B cell (primary cell): ENCODE measurements at regions of chr9 and their contacts with region 1.

Region 1: GRCh38 chr9:121074635-121075385 is at the start of gene CNTRL:
- DNase-seq: peak; percentile 85
- ATAC-seq: peak; percentile 72
- H3K4me3 ChIP-seq: peak within 1 kb of the TSS; percentile 80 to 99 (median 92)
- H3K4me3 Mint-ChIP-seq: peak within 1 kb of the TSS; percentile 100
- H3K27ac ChIP-seq: peak within 1 kb of the TSS; percentile 86 to 99
- H3K27ac Mint-ChIP-seq: peak within 1 kb of the TSS; percentile 94
- H3K4me1 ChIP-seq: peaks cover 42 to 49% of the 10 kb centered on the region in 2 donors
- H3K4me1 Mint-ChIP-seq: peaks cover 64% of the 10 kb centered on the region
- H3K27me3 ChIP-seq: no peaks in the 10 kb centered on the region
- H3K27me3 Mint-ChIP-seq: no peaks in the 10 kb centered on the region
- CTCF ChIP-seq: no peak
- total RNA-seq, gene CNTRL: 146 and 150 TPM in 2 replicates

Region 2: DNA sequence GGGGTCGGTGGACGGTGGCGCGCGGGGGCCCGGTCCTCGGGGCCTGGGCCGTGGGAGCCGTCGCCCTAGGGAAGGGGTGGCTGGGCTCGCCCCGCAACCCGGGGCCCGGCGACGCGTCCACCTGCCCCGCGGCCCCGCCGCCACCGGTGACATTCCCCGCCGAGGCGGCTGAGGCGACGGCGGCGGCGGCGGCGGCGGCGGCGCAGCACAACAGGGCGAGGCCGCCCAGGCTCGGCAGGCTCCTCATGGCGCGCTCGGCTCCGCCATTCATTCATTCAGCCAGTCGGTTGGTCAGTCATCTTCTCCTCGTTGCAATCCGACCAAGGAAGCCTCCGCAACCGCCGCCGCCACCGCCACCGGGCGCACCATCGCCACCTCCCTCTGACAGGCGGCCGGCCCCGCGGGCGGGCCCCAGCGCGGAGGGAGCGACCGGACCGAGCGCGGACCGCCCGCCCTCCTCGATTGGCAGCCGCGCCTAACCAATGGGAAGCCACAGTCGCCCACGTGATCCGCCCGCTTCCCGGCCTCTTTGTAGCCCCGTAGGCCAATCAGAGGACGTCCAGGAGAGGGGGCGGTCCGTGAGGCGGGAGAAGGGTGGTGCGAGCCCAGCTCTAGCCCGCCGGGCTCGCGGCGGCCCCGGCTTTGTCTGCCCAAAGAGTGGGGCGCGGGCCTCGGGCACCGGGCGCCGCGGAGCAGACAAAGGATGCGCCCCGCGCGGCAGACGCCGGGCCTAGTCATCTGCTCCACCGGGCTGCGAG is 360.5 kb before region 1 on chr9 and contains the start of gene MEGF9:
- CTCF ChIA-PET with region 1: no interaction called
- POLR2A ChIA-PET with region 1: interaction called, 5 read pairs
- intact Hi-C with region 1: loop called (anchors 1 kb)
- DNase-seq: peak; percentile 97
- ATAC-seq: peak; percentile 94
- H3K4me3 ChIP-seq: peak within 1 kb of the TSS; percentile 56 to 81 (median 68)
- H3K4me3 Mint-ChIP-seq: peak within 1 kb of the TSS; percentile 88
- H3K27ac ChIP-seq: peak within 1 kb of the TSS; percentile 43 to 72
- H3K27ac Mint-ChIP-seq: peak within 1 kb of the TSS; percentile 89
- H3K4me1 ChIP-seq: peaks cover 41 to 43% of the 10 kb centered on the region in 2 donors
- H3K4me1 Mint-ChIP-seq: peaks cover 38% of the 10 kb centered on the region
- H3K27me3 ChIP-seq: no peaks in the 10 kb centered on the region
- H3K27me3 Mint-ChIP-seq: no peaks in the 10 kb centered on the region
- CTCF ChIP-seq: no peak
- total RNA-seq, gene MEGF9: 11.3 and 11.6 TPM in 2 replicates

Region 3: DNA sequence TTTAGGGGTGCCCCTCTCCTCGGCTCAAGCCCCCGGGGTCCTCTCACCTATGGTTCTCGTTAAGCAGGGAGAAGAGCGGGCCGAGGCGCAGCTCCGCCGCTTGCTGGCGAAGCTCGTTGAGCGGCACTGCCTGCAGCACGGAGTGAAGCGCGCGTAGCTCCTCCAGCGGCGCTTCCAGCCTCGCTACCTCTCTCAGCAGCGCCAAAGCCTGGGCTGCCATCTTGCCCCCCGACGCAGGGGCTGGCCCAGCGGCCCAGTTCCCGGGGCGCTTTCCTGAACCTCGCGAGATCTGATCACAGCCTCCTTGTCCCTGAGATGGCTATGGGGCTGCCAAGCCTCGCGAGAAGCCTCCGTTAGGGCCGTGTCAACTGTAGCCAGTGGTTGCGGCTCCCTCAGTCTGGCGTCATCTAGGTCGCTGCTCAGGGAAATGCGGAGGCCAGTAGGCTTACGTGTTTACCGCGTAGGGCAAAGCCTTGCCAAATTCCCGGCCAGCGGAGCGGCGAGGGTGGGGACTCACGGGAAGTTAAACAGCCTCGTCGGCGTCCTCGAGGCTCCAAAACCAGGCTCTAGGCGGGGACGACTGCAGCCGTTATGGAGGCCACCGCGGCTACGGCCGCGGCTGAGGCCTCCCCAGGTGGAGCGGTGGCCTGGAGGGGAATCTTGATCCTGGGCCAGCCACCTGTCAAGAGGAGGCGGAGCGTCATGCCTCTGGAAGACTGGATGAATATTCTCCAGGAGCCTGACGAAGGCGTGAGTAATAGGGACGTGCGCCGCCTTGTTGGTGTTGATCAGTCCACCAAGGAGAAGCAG is 231.9 kb before region 1 on chr9 and contains the start of gene PSMD5:
- CTCF ChIA-PET with region 1: no interaction called
- POLR2A ChIA-PET with region 1: no interaction called
- intact Hi-C with region 1: loop called (anchors 2 kb)
- DNase-seq: peak; percentile 96
- ATAC-seq: peak; percentile 98
- H3K4me3 ChIP-seq: peak within 1 kb of the TSS; percentile 68 to 99 (median 82)
- H3K4me3 Mint-ChIP-seq: peak within 1 kb of the TSS; percentile 90
- H3K27ac ChIP-seq: peak within 1 kb of the TSS; percentile 89
- H3K27ac Mint-ChIP-seq: peak within 1 kb of the TSS; percentile 95
- H3K4me1 ChIP-seq: peaks cover 21 to 23% of the 10 kb centered on the region in 2 donors
- H3K4me1 Mint-ChIP-seq: peaks cover 27% of the 10 kb centered on the region
- H3K27me3 ChIP-seq: no peaks in the 10 kb centered on the region
- H3K27me3 Mint-ChIP-seq: no peaks in the 10 kb centered on the region
- CTCF ChIP-seq: no peak
- total RNA-seq, gene PSMD5: 25.3 and 26.8 TPM in 2 replicates

Region 4: DNA sequence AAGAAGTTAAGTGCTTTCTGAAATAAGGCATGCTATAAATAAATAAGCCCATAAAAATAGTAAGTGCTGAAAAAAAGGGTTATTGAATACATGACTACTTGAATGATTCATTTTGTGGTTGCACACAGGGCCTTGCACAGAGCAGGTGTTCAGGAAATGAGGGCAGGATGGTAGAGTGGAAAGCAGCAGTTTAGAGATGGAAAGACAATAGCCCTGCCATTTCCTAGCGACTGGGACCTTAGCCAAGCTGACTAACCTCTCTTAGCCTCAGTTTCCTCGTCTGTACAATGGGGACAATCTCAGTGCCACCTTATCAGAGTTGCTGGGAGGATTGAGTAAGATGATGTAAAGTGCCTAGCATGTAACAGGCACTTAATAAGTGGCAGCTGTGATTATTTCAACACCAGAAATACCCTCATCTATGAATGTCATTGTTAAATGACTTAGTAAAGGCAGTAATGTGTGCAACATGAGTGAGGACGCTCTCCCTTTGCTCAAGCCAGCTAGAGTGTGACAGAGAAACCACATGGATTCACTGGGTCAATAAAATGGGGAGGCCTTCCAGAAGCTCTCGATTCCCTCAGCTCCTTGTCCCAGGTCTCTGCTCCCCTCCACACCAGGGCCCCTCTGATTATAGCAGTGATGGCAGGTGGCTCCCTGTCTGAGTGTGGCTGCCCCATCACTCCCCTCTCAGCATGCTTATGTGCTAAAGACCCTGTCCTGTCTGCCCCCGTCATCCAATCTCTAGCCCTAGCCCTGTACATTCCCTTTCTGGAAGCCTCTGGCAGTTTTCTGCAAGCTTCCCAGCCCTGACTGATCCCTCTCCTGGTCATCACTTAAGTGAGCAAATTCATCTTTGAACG is 181.8 kb before region 1 on chr9:
- CTCF ChIA-PET with region 1: no interaction called
- POLR2A ChIA-PET with region 1: no interaction called
- intact Hi-C with region 1: loop called (anchors 1 kb)
- DNase-seq: peak; percentile 79
- ATAC-seq: peak; percentile 88
- H3K4me3 ChIP-seq: peak overlapping the region in 1 of 5 experiments; percentile 13
- H3K4me3 Mint-ChIP-seq: peak overlapping the region; percentile 71
- H3K27ac ChIP-seq: peak overlapping the region; percentile 51 to 65
- H3K27ac Mint-ChIP-seq: peak overlapping the region; percentile 79
- H3K4me1 ChIP-seq: peaks cover 48 to 49% of the 10 kb centered on the region in 2 donors
- H3K4me1 Mint-ChIP-seq: peaks cover 50% of the 10 kb centered on the region
- H3K27me3 ChIP-seq: no peaks in the 10 kb centered on the region
- H3K27me3 Mint-ChIP-seq: no peaks in the 10 kb centered on the region
- CTCF ChIP-seq: no peak

Region 5: GRCh38 chr9:120928483-120929228 is 146.2 kb before region 1 on chr9:
- CTCF ChIA-PET with region 1: no interaction called
- POLR2A ChIA-PET with region 1: no interaction called
- intact Hi-C with region 1: loop called (anchors 5 kb)
- DNase-seq: peak; percentile 83
- ATAC-seq: peak; percentile 60
- H3K4me3 ChIP-seq: peak overlapping the region in 4 of 5 experiments; percentile 56 to 82 (median 72)
- H3K4me3 Mint-ChIP-seq: peak overlapping the region; percentile 81
- H3K27ac ChIP-seq: peak overlapping the region; percentile 90 to 99
- H3K27ac Mint-ChIP-seq: peak overlapping the region; percentile 89
- H3K4me1 ChIP-seq: peaks cover 75 to 89% of the 10 kb centered on the region in 2 donors
- H3K4me1 Mint-ChIP-seq: peaks cover 86% of the 10 kb centered on the region
- H3K27me3 ChIP-seq: no peaks in the 10 kb centered on the region
- H3K27me3 Mint-ChIP-seq: no peaks in the 10 kb centered on the region
- CTCF ChIP-seq: peak; percentile 29

Region 6: DNA sequence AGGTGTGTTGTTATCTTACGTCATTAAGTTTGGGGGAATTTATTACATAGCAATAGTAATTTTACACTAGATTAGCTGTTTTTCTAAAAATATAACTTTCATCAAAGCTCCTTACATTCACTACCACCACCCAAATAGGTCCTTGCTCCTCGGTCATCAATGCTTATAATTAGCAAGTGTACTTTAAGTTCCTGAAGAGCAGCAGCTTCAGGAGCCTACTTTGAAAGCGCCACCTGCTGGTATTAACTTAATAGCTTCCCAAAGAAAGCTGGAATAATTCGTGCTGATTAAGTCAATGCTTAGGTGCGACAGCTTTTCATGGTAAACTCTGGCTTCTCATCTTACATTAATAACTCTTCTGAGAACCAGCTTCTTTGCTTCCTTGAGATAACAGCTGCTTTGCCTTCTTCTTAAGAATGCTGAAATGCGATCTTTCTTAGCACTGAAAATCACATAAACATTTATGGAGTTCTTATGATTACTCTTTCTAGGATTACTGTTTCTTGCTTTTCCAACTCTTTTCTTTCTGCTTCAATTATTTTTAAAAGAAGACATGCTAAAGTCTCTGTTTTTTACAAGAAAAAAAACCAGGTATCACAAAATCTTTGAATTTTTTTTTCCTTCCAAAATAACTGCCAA is 14.7 kb before region 1 on chr9:
- CTCF ChIA-PET with region 1: interaction called, 43 read pairs
- POLR2A ChIA-PET with region 1: no interaction called
- intact Hi-C with region 1: no loop called
- DNase-seq: peak; percentile 76
- ATAC-seq: peak; percentile 51
- H3K4me3 ChIP-seq: no peak overlapping the region
- H3K4me3 Mint-ChIP-seq: no peak overlapping the region
- H3K27ac ChIP-seq: no peak overlapping the region
- H3K27ac Mint-ChIP-seq: no peak overlapping the region
- H3K4me1 ChIP-seq: peaks cover 0 to 7% of the 10 kb centered on the region in 2 donors
- H3K4me1 Mint-ChIP-seq: peaks cover 6% of the 10 kb centered on the region
- H3K27me3 ChIP-seq: no peaks in the 10 kb centered on the region
- H3K27me3 Mint-ChIP-seq: no peaks in the 10 kb centered on the region
- CTCF ChIP-seq: peak; percentile 81

Region 7: DNA sequence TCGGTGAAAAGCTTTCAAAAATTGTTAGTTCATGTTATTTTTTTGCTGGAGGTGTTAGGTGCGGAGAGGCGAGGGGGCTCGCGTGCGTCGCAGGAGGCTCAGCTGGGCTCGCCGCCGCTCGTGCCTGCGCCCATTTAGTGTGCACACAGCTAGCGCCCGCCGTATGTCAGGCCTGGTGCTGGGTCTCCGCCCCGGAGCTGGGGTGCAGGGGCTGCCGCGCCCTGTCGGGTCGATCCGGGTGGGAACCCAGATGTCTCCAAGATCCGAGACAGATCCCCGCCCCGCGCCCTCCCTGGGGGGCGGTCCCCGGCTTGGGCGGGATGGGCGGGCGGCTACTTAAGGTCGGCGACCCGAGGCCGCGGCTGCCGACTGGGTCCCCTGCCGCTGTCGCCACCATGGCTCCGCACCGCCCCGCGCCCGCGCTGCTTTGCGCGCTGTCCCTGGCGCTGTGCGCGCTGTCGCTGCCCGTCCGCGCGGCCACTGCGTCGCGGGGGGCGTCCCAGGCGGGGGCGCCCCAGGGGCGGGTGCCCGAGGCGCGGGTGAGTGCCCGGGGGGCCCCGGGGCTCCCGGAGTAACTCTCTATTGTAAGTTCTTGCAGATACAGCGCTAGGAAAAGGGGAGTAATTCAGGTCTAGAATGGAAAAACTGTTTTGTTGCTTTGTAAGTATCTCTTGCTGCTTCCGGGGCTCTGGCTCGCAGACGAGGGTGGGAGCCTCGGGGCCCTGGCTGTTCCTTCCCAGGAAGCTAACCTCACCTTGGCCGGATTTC is 224.8 kb after region 1 on chr9:
- CTCF ChIA-PET with region 1: no interaction called
- POLR2A ChIA-PET with region 1: interaction called, 10 read pairs
- intact Hi-C with region 1: no loop called
- DNase-seq: peak; percentile 57
- ATAC-seq: peak; percentile 55
- H3K4me3 ChIP-seq: peak overlapping the region; percentile 17 to 61 (median 53)
- H3K4me3 Mint-ChIP-seq: peak overlapping the region; percentile 86
- H3K27ac ChIP-seq: peak overlapping the region; percentile 51 to 64
- H3K27ac Mint-ChIP-seq: peak overlapping the region; percentile 83
- H3K4me1 ChIP-seq: peaks cover 20 to 38% of the 10 kb centered on the region in 2 donors
- H3K4me1 Mint-ChIP-seq: peaks cover 25% of the 10 kb centered on the region
- H3K27me3 ChIP-seq: peaks cover 0 to 5% (median 2%) of the 10 kb centered on the region in 4 experiments
- H3K27me3 Mint-ChIP-seq: peaks cover 4% of the 10 kb centered on the region
- CTCF ChIP-seq: no peak